Activated T-helper 1 cell treated with anti-CD3 and anti-CD28 coated beads, Interleukin-12 subunit alpha, Interleukin-12 subunit beta, Interleukin-2, Interleukin-4 antibody, amounts not matched to agents 30 ng/mL and 10 ng/mL and 1 ng/mL, durations not matched to agents 14 hours and 24 hours and 36 hours (primary cell): ENCODE measurements at regions of chr2 and their contacts with region 1.

Region 1: DNA sequence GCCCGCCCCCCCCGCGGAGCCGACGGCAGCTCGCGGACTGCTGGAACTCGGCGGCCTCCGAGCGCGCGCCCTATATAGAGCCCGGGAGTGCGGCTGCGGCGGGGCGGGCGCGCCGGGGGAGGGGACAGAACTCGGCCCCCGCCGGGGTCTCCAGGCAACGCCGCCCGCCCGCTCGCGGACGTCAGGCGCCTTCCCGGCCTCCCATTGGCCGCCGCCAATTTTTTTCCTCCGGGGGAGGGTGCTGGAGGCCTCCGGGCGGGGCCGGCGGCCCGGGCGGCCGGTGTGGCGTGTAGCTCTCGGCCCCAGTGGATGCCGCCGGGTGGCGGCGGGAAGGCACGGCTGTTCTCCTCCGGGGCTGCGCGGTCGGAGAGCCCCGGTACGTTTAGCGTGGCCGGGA is at the start of gene ZFP36L2:
- DNase-seq: peak; percentile 95
- H3K4me3 Mint-ChIP-seq: peak within 1 kb of the TSS; percentile 92
- H3K27ac Mint-ChIP-seq: peak within 1 kb of the TSS; percentile 97
- H3K4me1 Mint-ChIP-seq: peaks cover 38% of the 10 kb centered on the region
- H3K27me3 Mint-ChIP-seq: no peaks in the 10 kb centered on the region
- total RNA-seq, gene ZFP36L2: 92.3 TPM in 2 replicates

Region 2: GRCh38 chr2:42810121-42810970 is 416.2 kb before region 1 on chr2:
- intact Hi-C with region 1: loop called (anchors 1 kb)
- DNase-seq: peak; percentile 94
- H3K4me3 Mint-ChIP-seq: peak overlapping the region; percentile 89
- H3K27ac Mint-ChIP-seq: peak overlapping the region; percentile 100
- H3K4me1 Mint-ChIP-seq: peaks cover 20% of the 10 kb centered on the region
- H3K27me3 Mint-ChIP-seq: peaks cover 21% of the 10 kb centered on the region

Region 3: GRCh38 chr2:42947809-42948600 is 278.6 kb before region 1 on chr2:
- intact Hi-C with region 1: loop called (anchors 1 kb)
- DNase-seq: no peak
- H3K4me3 Mint-ChIP-seq: no peak overlapping the region
- H3K27ac Mint-ChIP-seq: no peak overlapping the region
- H3K4me1 Mint-ChIP-seq: peaks cover 7% of the 10 kb centered on the region
- H3K27me3 Mint-ChIP-seq: peaks cover 15% of the 10 kb centered on the region

Region 4: GRCh38 chr2:43131024-43131889 is 95.3 kb before region 1 on chr2:
- intact Hi-C with region 1: loop called (anchors 1 kb)
- DNase-seq: peak; percentile 73
- H3K4me3 Mint-ChIP-seq: peak overlapping the region; percentile 45
- H3K27ac Mint-ChIP-seq: peak overlapping the region; percentile 83
- H3K4me1 Mint-ChIP-seq: peaks cover 83% of the 10 kb centered on the region
- H3K27me3 Mint-ChIP-seq: no peaks in the 10 kb centered on the region

Region 5: DNA sequence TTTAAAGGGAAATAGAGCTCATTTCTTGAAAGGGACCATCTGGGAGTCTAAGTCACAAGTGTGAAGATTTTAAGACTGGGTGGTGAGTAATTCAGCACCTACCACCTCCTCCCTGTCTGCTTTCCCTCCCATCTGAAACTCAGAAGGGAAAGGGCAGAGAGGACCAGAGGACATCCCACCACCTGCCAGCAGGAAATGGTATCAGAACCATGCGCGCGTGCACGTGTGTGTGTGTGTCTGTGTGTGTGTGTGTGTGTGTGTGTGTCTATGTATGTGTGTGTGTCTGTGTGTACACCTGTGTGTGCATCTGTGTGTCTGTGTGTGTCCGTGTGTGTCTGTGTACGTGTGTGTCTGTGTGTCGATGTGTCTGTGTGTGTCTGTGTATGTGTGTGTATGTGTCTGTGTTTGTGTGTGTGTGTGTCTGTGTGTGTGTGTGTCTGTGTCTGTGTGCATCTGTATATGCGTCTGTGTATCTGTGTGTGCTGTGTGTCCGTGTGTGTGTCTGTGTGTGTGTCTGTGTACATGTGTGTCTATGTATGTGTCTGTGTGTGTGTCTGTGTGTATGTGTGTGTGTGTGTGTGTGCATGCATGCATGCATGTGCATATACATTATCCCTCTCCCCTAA is 77.0 kb before region 1 on chr2:
- intact Hi-C with region 1: no loop called
- DNase-seq: no peak
- H3K4me3 Mint-ChIP-seq: peak overlapping the region; percentile 31
- H3K27ac Mint-ChIP-seq: peak overlapping the region; percentile 87
- H3K4me1 Mint-ChIP-seq: peaks cover 45% of the 10 kb centered on the region
- H3K27me3 Mint-ChIP-seq: no peaks in the 10 kb centered on the region

Region 6: DNA sequence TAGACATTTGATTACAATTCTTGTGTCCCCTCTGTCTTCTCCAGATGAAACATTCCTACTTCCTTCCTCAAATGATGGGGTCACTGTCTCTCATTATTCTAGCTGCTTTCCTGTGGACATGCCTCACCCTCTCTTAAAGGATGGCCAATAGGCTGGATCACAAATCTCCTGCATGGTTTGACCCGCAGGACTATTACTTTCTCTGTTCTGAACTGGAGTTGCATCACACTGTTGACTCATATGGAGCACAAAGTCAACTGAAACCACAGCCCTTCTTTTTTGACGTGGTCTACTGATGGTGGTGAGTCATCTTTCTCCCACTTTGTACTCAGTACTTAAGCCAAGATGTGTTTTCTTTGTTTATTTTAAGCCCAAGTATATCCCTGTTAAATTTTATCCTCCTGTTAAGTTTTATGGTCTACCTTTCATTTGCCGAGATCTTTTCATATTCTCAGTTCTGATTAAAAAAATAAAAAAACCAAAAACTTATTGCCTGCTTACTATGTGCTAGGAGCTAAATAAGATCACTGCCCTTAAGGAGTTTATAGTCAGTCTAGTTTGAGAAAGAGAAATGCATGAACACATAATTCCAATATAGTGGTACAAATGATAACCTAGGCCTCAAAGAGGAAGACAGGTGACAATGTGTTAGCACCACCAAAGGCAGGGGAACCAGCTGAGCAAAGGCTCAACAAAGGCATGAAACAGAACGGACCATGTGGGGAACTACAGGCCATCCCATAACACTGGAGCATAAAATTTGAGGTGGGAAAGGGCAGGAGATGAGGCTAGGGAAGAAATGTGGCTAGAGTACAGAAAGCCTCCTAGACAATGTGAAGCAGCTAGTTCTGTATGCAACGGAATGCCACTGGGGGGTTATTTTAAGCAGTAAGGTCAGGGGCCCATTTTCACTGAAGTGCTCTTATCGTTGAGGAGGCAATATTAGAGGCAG is 67.5 kb after region 1 on chr2:
- intact Hi-C with region 1: loop called (anchors 1 kb)
- DNase-seq: peak; percentile 66
- H3K4me3 Mint-ChIP-seq: peak overlapping the region; percentile 35
- H3K27ac Mint-ChIP-seq: peak overlapping the region; percentile 77
- H3K4me1 Mint-ChIP-seq: peaks cover 34% of the 10 kb centered on the region
- H3K27me3 Mint-ChIP-seq: no peaks in the 10 kb centered on the region

Region 7: DNA sequence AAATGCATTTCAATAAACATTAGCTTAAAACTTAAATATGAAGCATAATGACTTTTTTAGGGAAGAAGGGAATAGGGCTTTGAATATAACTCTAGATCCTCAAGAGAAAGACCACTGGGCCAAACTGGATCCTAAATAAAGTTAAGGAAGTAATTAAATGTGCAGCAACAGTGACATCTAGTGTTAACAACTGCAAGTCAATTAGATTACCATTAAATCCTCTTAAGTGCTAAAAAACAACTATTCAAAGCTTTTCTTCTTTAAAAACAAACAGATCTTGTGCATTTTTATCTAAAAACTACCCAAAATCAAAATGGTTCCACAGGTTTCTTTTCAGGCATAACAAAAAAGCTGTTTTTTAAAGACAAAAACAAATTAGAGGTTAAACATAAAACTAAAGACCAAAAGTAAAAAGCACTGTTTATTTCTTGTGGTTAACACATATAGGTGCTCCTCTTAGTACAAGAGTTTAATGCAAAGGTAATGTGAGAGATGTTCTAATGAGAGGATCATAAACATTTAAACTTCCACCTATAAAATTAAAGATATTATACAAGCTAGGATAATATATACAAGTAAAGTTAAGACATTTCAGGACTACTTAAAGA is 257.9 kb after region 1 on chr2:
- intact Hi-C with region 1: loop called (anchors 1 kb)
- DNase-seq: no peak
- H3K4me3 Mint-ChIP-seq: no peak overlapping the region
- H3K27ac Mint-ChIP-seq: no peak overlapping the region
- H3K4me1 Mint-ChIP-seq: peaks cover 7% of the 10 kb centered on the region
- H3K27me3 Mint-ChIP-seq: no peaks in the 10 kb centered on the region

Region 8: DNA sequence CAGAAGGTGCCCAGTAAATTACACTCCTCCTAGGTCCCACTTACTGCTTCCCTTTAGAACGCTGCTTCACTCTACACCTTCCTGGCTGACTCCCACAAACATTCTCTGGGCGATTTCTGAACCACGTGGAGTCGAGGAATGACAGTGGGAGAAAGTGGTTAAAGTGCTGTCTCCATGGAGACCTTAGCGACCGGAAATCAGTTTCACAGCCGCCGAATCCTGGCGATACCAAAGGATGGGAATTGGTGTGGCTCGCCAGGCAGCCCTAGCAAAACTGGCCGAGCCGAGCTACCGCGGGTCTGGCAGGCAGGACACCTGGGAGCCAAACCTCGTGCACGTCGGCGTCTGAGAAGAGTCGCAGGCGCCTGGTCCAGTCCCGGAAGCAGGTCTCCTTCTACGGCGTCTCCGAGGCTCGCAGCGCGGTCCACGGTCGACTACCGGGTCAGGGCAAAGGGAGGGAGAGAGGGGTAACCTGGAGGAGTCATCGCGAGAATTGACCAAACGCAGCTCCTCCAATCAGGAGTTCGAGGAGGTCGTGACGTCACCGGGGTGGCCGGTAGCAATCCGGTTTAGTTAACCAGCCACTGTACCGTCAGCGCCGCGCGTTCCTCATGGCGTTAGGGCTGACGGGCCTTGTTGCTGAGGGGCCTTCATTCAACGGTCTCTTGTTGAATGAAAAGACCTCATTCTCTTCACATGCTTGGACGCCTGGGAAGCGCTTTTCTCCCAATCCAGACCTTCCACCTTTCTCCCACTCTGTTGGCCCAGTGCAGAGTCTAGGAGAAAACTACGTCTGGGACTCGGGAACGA is 369.3 kb after region 1 on chr2 and contains the start of gene THADA:
- intact Hi-C with region 1: loop called (anchors 2 kb)
- DNase-seq: peak; percentile 97
- H3K4me3 Mint-ChIP-seq: peak within 1 kb of the TSS; percentile 96
- H3K27ac Mint-ChIP-seq: peak within 1 kb of the TSS; percentile 98
- H3K4me1 Mint-ChIP-seq: peaks cover 42% of the 10 kb centered on the region
- H3K27me3 Mint-ChIP-seq: peaks cover 2% of the 10 kb centered on the region
- total RNA-seq, gene THADA: 49.8 and 51.7 TPM in 2 replicates